Right ventricle myocardium inferior (tissue), 1 donor: ENCODE measurements at regions of chr5 and their contacts with region 1.

Region 1: GRCh38 chr5:6377905-6378765 is at the start of gene MED10:
- DNase-seq: peak; percentile 97
- ATAC-seq: peak; percentile 100
- total RNA-seq, gene MED10: 28.9 TPM

Region 2: GRCh38 chr5:6430418-6431028 is 52.4 kb after region 1 on chr5:
- intact Hi-C with region 1: loop called (anchors 5 kb)
- DNase-seq: peak; percentile 78
- ATAC-seq: peak; percentile 89

Region 3: DNA sequence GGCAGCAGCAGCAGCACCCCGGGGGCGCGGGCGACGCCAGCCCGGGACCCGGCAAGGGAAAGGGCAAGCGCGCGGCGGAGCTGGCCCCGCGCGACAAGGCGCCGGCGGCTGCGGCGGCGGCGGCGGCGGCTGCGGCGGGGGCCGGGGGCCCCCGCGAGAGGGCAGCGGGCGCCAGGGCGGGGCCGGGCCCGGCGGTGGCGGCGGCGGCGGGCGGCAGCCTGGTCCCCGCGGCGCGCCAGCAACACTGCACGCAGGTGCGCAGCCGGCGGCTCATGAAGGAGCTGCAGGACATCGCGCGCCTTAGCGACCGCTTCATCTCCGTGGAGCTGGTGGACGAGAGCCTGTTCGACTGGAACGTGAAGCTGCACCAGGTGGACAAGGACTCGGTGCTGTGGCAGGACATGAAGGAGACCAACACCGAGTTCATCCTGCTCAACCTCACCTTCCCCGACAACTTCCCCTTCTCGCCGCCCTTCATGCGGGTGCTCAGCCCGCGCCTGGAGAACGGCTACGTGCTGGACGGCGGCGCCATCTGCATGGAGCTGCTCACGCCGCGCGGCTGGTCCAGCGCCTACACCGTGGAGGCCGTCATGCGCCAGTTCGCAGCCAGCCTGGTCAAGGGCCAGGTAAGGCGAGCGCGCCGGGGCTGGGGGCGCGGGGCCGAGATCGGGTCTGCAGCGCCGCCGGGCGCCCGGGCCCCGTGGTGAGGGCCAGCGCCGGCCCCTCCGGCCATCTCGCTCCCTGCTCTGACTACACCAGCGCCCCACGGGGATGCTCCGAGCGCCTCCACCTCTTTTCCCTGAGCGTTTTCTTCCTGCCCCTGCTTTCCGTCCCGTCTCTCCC is 70.7 kb after region 1 on chr5 and contains the start of gene UBE2QL1:
- intact Hi-C with region 1: loop called (anchors 5 kb)
- DNase-seq: no peak
- ATAC-seq: peak; percentile 43
- total RNA-seq, gene UBE2QL1: 21.9 TPM

Region 4: DNA sequence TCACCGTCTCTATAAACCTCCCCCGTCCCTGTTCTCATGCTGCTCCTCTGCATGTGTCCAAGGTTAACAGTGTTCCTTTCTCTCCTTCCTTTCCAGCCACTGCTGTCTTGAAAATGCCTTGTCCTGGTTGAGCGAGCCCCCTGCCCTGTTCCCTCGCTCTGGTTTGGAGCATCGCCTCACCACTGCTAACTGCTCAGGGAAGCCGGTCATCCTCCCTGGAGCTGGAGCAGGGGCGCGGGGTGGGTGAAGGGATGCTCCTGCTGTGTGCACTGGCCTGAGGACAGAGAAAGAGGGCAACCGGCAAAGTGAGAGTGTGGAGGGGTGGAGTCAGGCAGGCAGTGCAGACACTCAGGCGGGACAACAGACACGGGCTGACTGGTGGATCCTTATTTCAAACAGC is 90.0 kb after region 1 on chr5:
- intact Hi-C with region 1: no loop called
- DNase-seq: no peak
- ATAC-seq: no peak

Region 5: DNA sequence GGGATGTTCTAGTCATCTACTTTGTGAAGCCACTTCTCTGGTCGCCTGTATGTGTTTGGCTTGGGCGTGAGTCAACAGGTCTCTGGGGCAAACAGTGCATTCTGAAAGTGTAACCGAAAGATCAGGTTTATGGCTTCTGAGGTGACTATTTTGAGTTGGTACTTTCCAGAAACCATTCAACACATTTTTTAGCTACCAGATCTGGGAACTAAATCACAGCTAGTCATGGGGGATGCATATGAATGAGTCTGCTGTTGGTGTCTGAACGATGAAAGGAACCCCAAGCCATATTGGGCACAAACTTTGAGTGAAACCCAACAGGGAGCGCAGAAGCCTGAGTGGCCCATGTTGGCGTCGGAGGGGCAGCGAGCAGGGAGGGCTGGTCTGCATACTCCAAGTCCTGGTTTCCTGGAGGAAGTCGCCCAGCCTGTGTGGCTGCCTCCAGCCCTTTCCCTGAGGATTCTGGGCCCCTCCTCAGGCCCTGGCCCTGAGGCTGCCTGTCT is 105.8 kb after region 1 on chr5:
- intact Hi-C with region 1: no loop called
- DNase-seq: no peak
- ATAC-seq: no peak

Region 6: GRCh38 chr5:6510132-6510531 is 132.0 kb after region 1 on chr5:
- intact Hi-C with region 1: loop called (anchors 10 kb)
- DNase-seq: no peak
- ATAC-seq: no peak

Region 7: DNA sequence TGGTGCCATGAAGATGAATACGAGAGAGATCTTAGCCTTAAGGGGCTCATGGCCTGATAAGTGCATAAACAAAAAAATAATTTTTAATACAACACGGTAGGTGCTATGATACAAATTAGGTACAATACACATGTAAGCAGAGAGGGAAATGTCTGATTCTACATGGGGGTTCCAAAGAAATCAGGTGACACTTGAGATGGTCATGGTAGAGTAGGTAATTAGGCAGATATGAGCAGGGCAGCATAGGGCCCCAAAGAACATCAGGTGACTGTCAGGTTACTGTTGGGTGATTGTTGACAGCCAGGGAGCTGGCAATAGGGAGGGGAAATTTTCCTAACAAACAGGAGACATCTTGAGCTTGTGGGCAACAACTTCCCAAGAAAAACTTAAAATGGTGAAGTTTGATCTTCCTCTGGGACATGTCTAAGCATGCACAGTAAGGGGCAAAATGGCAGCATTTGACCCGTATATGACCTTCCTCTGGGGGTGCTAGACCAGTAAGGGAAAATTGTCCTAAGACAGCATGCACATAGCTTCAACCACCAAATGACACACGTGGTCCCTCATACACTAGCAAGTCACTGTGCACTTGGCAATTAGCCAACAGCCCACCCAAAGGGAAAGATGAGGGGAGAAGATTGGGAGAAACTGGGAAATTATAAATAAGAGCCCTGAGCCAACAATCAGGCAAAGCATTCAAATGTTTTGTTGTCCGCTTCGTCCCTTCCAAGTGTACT is 297.8 kb after region 1 on chr5:
- intact Hi-C with region 1: no loop called
- DNase-seq: no peak
- ATAC-seq: no peak

Region 8: DNA sequence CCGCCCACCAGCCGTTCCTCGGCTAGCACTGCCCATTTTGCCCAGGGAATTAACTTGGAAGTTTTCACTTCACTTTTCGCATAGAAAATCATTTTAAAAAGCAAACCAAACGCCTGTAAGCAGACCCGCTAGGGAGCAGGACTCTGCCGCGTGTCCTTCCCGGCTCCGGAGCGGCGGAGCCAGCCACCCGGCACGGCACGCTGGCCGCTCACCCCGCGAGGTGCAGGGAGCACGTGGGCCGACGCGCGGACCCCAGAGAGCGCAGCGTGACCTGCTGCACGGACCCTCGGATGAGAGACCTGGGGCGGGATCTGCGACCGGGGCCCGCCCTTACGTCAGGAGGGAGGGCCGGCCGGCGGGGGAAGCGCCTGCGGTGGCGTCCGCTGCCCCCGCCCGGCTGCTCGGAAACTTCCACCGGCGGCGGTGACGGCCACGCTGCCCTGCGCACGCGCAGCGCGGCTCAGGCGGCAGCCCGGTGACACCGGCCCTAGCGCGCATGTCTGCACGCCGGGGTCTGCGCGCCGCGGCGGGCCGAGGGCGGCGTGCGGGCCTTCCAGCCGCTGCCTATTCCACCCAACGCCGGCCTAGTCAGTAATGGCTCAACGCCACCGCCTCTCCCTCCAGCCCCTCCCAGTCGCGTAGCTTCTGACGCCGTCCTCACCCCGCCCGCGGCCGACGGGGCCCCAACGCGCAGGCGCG is 334.6 kb after region 1 on chr5:
- intact Hi-C with region 1: loop called (anchors 10 kb)
- DNase-seq: peak; percentile 98
- ATAC-seq: peak; percentile 90